IMR-90 (cell line): ENCODE measurements at regions of chr2 and their contacts with region 1.

Region 1: GRCh38 chr2:234881413-234882241 is 70.2 kb upstream of the SH3BP4 start:
- DNase-seq: peak; percentile 97
- ATAC-seq: peak; percentile 88
- H3K4me3 ChIP-seq: peak overlapping the region; percentile 12; the same call in 1 of the 2 replicates
- H3K27ac ChIP-seq: peak overlapping the region; percentile 96
- H3K4me1 ChIP-seq: peaks cover 13% of the 10 kb centered on the region
- H3K27me3 ChIP-seq: no peaks in the 10 kb centered on the region
- CTCF ChIP-seq: peak; percentile 91
- POLR2A ChIP-seq: no peak
- RAD21 ChIP-seq: peak; percentile 64

Region 2: GRCh38 chr2:234564699-234565098 is 316.9 kb before region 1 on chr2:
- CTCF ChIA-PET with region 1: interaction called, 10 read pairs
- POLR2A ChIA-PET with region 1: no interaction called
- dilution Hi-C with region 1: no loop called
- in situ Hi-C with region 1: loop called (anchors 10 kb)
- intact Hi-C with region 1: no loop called
- DNase-seq: peak; percentile 80
- ATAC-seq: peak; percentile 87
- H3K4me3 ChIP-seq: no peak overlapping the region
- H3K27ac ChIP-seq: no peak overlapping the region; the same call in 1 of the 2 replicates
- H3K4me1 ChIP-seq: peaks cover 8% of the 10 kb centered on the region
- H3K27me3 ChIP-seq: no peaks in the 10 kb centered on the region; the same call in 1 of the 2 replicates
- CTCF ChIP-seq: peak; percentile 56
- POLR2A ChIP-seq: no peak
- RAD21 ChIP-seq: peak; percentile 71

Region 3: DNA sequence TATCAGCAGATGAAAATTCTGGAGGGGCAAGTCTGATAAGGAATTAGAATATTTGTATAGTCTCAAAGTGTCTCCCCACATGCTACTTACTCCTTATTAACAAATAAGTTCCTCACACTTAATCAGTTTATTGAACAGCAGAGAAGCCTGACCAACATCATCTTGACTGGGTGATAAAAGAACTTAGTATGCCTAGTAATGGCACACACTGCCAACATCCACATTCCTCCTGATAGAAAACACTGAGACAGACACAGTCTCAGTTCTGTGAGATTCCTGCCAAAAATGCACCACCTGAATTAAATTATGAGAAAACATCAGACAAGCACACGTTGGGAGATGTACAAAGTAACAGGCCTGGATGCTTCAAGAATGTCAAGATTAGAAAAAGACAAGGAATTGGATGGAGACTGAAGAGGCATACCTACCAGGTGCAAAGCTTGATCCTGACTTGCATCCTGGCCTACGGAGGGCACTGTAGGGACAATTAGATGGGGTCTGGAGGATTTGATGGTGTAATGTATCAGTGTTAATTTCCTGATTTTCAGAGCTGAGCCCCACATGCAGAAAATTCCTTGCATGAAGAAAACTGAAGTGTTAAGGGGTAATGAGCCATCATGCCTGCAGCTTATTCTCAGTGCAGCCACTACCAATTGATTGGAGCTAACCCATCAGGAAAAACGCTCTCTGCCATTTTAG is 130.2 kb before region 1 on chr2:
- CTCF ChIA-PET with region 1: no interaction called
- POLR2A ChIA-PET with region 1: no interaction called
- dilution Hi-C with region 1: no loop called
- in situ Hi-C with region 1: no loop called
- intact Hi-C with region 1: no loop called
- DNase-seq: no peak
- ATAC-seq: no peak
- H3K4me3 ChIP-seq: no peak overlapping the region
- H3K27ac ChIP-seq: no peak overlapping the region
- H3K4me1 ChIP-seq: peaks cover 15% of the 10 kb centered on the region
- H3K27me3 ChIP-seq: no peaks in the 10 kb centered on the region
- CTCF ChIP-seq: no peak
- POLR2A ChIP-seq: no peak
- RAD21 ChIP-seq: no peak

Region 4: DNA sequence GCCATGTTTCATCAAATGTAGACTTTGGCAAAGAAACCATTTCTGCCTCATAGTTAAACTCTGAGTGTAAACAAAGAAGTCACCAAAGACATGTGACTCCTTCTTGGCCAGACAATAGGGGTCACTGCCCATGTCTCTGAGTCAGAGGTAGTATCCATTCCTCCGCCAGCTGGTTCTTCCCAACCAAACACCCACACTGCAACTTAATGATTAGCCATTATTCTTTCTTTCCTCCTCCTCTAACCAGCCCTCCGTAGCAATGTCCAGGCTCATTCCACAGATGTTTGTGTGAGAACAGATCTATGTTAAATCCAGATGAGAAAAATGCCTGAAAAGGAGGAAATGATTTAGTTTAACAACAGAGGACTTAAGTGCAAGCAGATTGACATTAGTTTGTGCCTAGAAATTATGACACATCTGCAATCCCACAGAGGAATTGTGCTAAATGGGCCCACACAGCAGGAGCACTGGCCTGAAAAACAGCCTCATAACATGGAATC is 57.7 kb before region 1 on chr2:
- CTCF ChIA-PET with region 1: interaction called, 4 read pairs
- POLR2A ChIA-PET with region 1: no interaction called
- dilution Hi-C with region 1: no loop called
- in situ Hi-C with region 1: no loop called
- intact Hi-C with region 1: loop called (anchors 1 kb)
- DNase-seq: peak; percentile 98
- ATAC-seq: peak; percentile 92
- H3K4me3 ChIP-seq: no peak overlapping the region
- H3K27ac ChIP-seq: peak overlapping the region; percentile 95
- H3K4me1 ChIP-seq: peaks cover 14% of the 10 kb centered on the region
- H3K27me3 ChIP-seq: no peaks in the 10 kb centered on the region
- CTCF ChIP-seq: no peak
- POLR2A ChIP-seq: no peak
- RAD21 ChIP-seq: no peak; the same call in 1 of the 2 replicates

Region 5: DNA sequence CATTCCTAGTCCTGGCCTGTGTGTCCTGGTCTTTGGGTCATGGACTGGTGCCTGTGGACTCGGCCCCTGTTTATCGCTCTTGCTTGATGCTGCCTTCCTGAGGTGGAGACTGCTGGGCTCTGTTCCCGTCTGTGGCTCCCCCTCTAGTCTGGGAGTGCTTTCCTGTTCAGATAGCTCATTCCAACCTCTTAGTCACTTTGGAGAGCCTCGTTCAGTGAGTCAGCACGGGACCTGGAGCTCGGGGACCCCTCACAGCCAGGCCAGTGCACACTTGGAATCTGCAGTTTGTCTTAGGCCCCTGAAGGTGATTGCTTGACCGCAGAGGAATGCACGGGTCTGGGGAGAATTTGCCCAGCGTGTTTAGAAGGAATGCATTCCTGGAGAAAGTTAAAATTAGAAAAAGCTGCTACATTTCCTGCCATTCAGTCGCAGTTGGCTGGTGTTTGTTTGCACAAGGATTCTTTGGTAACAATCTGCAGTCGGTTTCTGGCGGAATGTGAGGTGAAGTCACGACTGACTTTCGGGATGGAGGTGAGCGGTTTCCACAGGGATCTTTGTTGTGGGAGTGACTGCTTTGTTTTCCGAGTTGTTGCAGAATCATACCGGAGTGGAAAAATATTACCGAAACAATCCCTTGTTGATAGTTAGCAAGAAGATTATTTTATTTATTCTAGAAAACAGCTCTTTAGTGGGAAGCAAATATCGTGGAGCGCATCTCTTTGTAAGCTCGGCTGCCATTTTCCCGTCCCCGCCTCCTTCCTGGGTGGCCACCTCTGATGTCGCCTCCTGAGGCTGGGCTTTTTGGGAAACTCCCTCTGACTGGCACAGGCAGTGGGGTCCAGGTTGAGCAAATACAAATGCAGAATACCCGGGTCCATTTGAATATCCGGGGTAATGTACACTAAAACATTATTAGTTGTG is 99.8 kb after region 1 on chr2:
- CTCF ChIA-PET with region 1: interaction called, 3 read pairs
- POLR2A ChIA-PET with region 1: no interaction called
- dilution Hi-C with region 1: no loop called
- in situ Hi-C with region 1: no loop called
- intact Hi-C with region 1: loop called (anchors 5 kb)
- DNase-seq: peak; percentile 100
- ATAC-seq: peak; percentile 82
- H3K4me3 ChIP-seq: no peak overlapping the region
- H3K27ac ChIP-seq: peak overlapping the region; percentile 86
- H3K4me1 ChIP-seq: peaks cover 54% of the 10 kb centered on the region
- H3K27me3 ChIP-seq: no peaks in the 10 kb centered on the region
- CTCF ChIP-seq: peak; percentile 44
- POLR2A ChIP-seq: peak; percentile 71
- RAD21 ChIP-seq: peak; percentile 46